Activated CD8-positive, alpha-beta T cell treated with anti-CD3 and anti-CD28 coated beads, Interleukin-2, amount 10 ng/mL, durations not matched to agents 7 days and 5 days (primary cell): ENCODE measurements at regions of chr3 and their contacts with region 1.

Region 1: DNA sequence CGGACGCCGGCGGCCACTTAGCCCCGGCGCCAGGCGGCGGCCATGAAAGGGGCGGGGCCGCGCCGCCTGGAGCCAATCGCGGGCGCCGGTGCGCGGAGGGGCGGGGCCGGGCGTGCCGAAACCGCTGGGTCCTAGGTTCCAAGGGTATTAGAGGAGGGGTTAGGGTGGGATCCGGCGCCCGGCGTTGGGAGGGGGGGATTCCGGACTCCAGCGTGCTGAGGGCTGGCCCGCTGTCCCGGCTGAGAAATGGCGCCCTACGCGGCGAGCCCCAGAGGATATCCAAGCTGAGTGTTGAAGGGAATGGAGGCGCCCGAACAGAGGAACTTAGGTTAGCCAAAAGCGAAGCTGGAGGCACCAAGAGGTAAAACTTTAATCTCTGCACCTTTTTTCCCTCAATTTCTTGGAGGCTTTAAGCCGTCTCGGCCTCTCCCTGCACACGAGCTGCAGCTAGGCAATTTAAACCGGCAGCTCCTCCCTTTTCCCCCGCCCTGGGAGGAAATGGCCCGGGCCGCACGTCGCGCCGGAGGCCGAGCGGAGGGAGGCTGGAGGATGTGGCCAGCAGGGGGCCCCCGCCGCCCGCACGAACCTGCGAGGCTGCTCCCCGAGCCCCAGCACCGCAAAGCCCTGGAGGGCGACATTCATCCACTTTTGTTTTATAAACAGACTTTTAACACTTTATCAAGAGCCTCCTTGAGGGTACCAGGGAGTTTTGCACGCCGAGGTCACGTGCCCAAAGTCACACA is at the start of gene XXYLT1:
- DNase-seq: peak; percentile 94
- ATAC-seq: peak; percentile 86
- H3K4me3 Mint-ChIP-seq: peak within 1 kb of the TSS; percentile 83
- H3K27ac Mint-ChIP-seq: peak within 1 kb of the TSS; percentile 86
- H3K4me1 Mint-ChIP-seq: peaks cover 32% of the 10 kb centered on the region
- H3K27me3 Mint-ChIP-seq: no peaks in the 10 kb centered on the region
- total RNA-seq, gene XXYLT1: 10.8 to 13.3 TPM

Region 2: DNA sequence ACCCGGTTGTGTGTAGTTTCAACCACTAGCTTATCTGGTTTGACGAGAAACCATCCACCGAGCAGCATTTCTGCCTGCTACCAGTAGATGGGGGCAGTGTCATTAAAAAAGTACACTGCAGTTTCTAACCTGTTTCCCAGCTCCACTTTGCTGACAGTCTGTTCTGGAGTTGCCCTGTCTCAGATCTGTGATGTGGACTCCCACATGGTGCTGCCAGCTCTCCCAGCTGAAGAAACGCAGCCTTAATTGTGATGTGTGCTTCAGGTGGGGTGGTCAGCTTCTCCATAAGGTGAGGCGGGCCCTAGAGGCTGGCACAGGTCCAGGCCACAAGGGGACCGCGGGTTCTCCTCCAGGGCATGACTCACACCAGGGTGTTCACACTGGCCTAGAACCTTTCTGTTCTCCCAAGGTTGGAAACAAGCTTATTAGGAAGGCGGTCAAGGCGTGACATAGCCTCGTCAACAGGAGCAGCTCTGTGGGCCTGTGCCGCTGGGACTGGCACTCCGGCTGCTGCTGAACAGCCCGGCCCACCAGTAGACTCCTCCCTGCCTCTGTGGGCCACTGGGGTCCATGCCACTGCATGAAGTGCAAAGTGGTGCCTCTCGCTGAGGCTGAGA is 588.5 kb before region 1 on chr3:
- CTCF ChIA-PET with region 1: interaction called, 37 read pairs
- POLR2A ChIA-PET with region 1: no interaction called
- DNase-seq: peak; percentile 81
- ATAC-seq: peak; percentile 57
- H3K4me3 Mint-ChIP-seq: no peak overlapping the region
- H3K27ac Mint-ChIP-seq: no peak overlapping the region
- H3K4me1 Mint-ChIP-seq: peaks cover 40% of the 10 kb centered on the region
- H3K27me3 Mint-ChIP-seq: peaks cover 23% of the 10 kb centered on the region

Region 3: GRCh38 chr3:194976049-194976451 is 295.2 kb before region 1 on chr3:
- CTCF ChIA-PET with region 1: no interaction called
- POLR2A ChIA-PET with region 1: no interaction called
- DNase-seq: no peak
- ATAC-seq: no peak
- H3K4me3 Mint-ChIP-seq: no peak overlapping the region
- H3K27ac Mint-ChIP-seq: no peak overlapping the region
- H3K4me1 Mint-ChIP-seq: no peaks in the 10 kb centered on the region
- H3K27me3 Mint-ChIP-seq: peaks cover 19% of the 10 kb centered on the region

Region 4: DNA sequence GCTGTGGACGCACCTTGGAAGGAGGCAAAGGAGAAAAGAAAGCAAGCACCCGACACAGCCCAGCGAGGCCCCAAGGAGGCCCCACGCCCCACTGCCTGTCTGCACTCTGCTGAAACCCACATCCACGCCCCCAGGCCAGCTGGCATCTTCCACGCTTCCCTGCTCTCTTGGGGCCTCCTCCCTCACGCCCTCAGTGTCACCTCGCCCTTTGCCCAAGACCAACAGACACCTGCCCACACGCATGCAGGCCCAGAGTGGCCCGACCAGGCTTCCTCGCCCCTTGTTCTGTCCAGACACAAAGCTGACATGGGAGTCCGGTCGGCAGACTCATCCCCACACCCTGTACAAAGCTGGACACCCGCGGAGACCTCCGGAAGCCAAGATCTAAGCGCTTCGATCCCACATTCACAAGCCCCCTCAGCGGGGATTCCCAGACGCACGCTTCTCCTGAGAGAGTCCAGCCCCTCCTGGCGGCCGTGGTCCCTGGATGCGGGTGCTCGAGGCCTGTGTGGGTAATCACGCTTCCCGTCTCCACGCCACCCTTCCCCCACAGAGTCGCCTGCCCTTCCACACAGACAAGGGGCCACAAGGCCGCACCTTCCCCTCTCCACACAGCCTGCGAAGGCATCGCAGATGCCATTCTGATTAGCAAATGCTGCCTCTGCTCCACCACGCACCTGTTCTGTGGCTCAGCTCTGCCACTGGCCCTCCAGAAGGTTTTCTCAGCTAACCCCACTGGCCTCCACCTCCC is 176.9 kb before region 1 on chr3:
- CTCF ChIA-PET with region 1: no interaction called
- POLR2A ChIA-PET with region 1: no interaction called
- DNase-seq: no peak
- ATAC-seq: no peak
- H3K4me3 Mint-ChIP-seq: no peak overlapping the region
- H3K27ac Mint-ChIP-seq: no peak overlapping the region
- H3K4me1 Mint-ChIP-seq: peaks cover 20% of the 10 kb centered on the region
- H3K27me3 Mint-ChIP-seq: no peaks in the 10 kb centered on the region

Region 5: GRCh38 chr3:195297446-195297845 is 26.2 kb after region 1 on chr3:
- CTCF ChIA-PET with region 1: interaction called, 13 read pairs
- POLR2A ChIA-PET with region 1: no interaction called
- DNase-seq: no peak
- ATAC-seq: no peak
- H3K4me3 Mint-ChIP-seq: no peak overlapping the region
- H3K27ac Mint-ChIP-seq: no peak overlapping the region
- H3K4me1 Mint-ChIP-seq: no peaks in the 10 kb centered on the region
- H3K27me3 Mint-ChIP-seq: no peaks in the 10 kb centered on the region

Region 6: GRCh38 chr3:195467641-195468390 is 196.5 kb after region 1 on chr3:
- CTCF ChIA-PET with region 1: interaction called, 11 read pairs
- POLR2A ChIA-PET with region 1: no interaction called
- DNase-seq: no peak
- ATAC-seq: peak; percentile 51
- H3K4me3 Mint-ChIP-seq: no peak overlapping the region
- H3K27ac Mint-ChIP-seq: peak overlapping the region; percentile 8
- H3K4me1 Mint-ChIP-seq: peaks cover 8% of the 10 kb centered on the region
- H3K27me3 Mint-ChIP-seq: no peaks in the 10 kb centered on the region

Region 7: GRCh38 chr3:195522254-195523023 is 251.2 kb after region 1 on chr3:
- CTCF ChIA-PET with region 1: interaction called, 258 read pairs
- POLR2A ChIA-PET with region 1: interaction called, 7 read pairs
- DNase-seq: peak; percentile 59
- ATAC-seq: no peak
- H3K4me3 Mint-ChIP-seq: no peak overlapping the region
- H3K27ac Mint-ChIP-seq: peak overlapping the region; percentile 2
- H3K4me1 Mint-ChIP-seq: peaks cover 36% of the 10 kb centered on the region
- H3K27me3 Mint-ChIP-seq: no peaks in the 10 kb centered on the region

Region 8: DNA sequence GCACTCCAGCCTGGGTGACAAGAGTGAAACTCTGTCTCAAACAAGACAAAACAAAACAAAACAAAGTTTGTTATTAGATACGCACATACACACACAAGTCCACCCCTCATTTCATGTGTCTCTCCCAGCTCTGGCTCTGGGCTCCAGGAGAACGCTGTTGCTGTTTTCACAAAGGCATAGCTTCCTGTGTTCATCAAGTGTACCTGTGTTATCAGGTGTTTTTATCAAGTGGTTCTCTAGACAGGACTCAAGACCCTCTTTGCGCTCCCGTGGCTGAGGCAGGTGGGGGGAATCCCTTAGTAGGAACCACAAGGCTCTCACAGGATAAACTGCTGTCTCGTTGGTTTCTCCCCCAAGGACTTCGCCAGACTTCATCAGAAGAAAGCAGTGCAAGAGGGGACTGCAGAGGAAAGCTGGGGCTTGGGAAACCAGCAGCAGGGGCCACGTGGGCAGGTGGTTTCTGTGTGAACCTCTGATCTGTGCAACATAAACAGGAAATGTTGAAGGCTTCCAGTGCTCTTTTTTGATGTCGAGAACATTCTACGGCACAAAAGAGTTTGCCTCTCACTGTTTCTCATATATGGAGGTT is 278.7 kb after region 1 on chr3:
- CTCF ChIA-PET with region 1: interaction called, 69 read pairs
- POLR2A ChIA-PET with region 1: interaction called, 7 read pairs
- DNase-seq: peak; percentile 90
- ATAC-seq: peak; percentile 75
- H3K4me3 Mint-ChIP-seq: peak overlapping the region; percentile 65
- H3K27ac Mint-ChIP-seq: peak overlapping the region; percentile 93
- H3K4me1 Mint-ChIP-seq: peaks cover 79% of the 10 kb centered on the region
- H3K27me3 Mint-ChIP-seq: no peaks in the 10 kb centered on the region